Sciatic nerve (tissue), 2 donors: ENCODE measurements at regions of chrX and their contacts with region 1.

Region 1: GRCh38 chrX:143429831-143430230 is 87.4 kb downstream of the SPANXN3 start:
- DNase-seq: no peak
- ATAC-seq: no peak

Region 2: DNA sequence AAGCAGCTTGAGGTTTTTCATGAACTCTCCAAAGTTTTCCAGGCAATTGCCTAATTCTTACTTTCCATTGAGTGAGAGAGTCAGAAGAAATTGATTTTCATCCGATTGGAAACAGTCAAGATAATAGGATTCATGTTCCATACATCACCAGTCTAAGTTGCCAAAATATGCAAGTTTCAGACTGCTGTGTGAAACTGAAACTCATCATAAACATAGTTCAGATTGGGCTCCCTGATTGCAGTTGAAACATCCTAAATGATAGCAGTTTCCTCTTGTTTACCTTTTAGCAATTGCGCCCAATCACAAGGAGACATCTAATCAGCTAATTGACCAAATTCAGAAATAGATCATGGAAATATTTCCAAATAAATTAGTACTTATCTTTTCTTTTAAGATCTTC is 347.3 kb before region 1 on chrX:
- intact Hi-C with region 1: no loop called
- DNase-seq: no peak
- ATAC-seq: no peak

Region 3: GRCh38 chrX:144379156-144379555 is 949.3 kb after region 1 on chrX:
- intact Hi-C with region 1: loop called (anchors 5 kb)
- DNase-seq: no peak
- ATAC-seq: no peak